ENCODE measurements at regions of chr14 and their contacts with region 1.

Region 1: GRCh38 chr14:80996049-80996901 is 40.9 kb downstream of the TSHR start:
- DNase-seq: peak; percentile 86
- H3K4me3 Mint-ChIP-seq: no peak overlapping the region
- H3K27ac Mint-ChIP-seq: no peak overlapping the region
- H3K4me1 Mint-ChIP-seq: no peaks in the 10 kb centered on the region
- H3K27me3 Mint-ChIP-seq: peaks cover 65% of the 10 kb centered on the region
- CTCF ChIP-seq: peak; percentile 63

Region 2: GRCh38 chr14:80636071-80636470 is 360.2 kb before region 1 on chr14:
- CTCF ChIA-PET with region 1: no interaction called
- POLR2A ChIA-PET with region 1: no interaction called
- intact Hi-C with region 1: no loop called
- DNase-seq: peak; percentile 38
- H3K4me3 Mint-ChIP-seq: no peak overlapping the region
- H3K27ac Mint-ChIP-seq: no peak overlapping the region
- H3K4me1 Mint-ChIP-seq: peaks cover 35% of the 10 kb centered on the region
- H3K27me3 Mint-ChIP-seq: no peaks in the 10 kb centered on the region
- CTCF ChIP-seq: peak; percentile 21

Region 3: GRCh38 chr14:80954687-80955299 is 41.5 kb before region 1 on chr14:
- CTCF ChIA-PET with region 1: interaction called, 140 read pairs
- POLR2A ChIA-PET with region 1: interaction called, 3 read pairs
- intact Hi-C with region 1: no loop called
- DNase-seq: peak; percentile 75
- H3K4me3 Mint-ChIP-seq: peak overlapping the region; percentile 70
- H3K27ac Mint-ChIP-seq: no peak overlapping the region
- H3K4me1 Mint-ChIP-seq: no peaks in the 10 kb centered on the region
- H3K27me3 Mint-ChIP-seq: peaks cover 76% of the 10 kb centered on the region
- CTCF ChIP-seq: peak; percentile 76

Region 4: DNA sequence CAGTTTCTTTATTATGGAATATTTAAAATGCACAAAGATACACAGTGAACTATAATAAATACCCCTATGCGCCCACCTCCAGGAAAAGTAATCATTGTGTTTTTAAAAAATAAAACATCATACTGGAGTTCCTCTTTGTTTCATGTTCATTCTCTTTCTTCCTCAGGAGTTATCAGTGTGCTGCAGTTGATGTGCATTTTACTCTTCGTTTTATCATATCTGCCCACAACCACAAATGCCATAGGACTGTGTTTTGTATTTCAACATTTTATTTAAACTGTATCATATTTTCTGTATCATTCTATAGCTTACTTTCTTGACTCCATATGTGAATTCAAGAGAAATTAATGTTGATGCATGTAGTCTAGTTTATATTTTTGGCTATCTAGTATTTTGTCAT is 13.1 kb after region 1 on chr14:
- CTCF ChIA-PET with region 1: interaction called, 13 read pairs
- POLR2A ChIA-PET with region 1: no interaction called
- intact Hi-C with region 1: no loop called
- DNase-seq: no peak
- H3K4me3 Mint-ChIP-seq: no peak overlapping the region
- H3K27ac Mint-ChIP-seq: no peak overlapping the region
- H3K4me1 Mint-ChIP-seq: no peaks in the 10 kb centered on the region
- H3K27me3 Mint-ChIP-seq: no peaks in the 10 kb centered on the region
- CTCF ChIP-seq: no peak

Region 5: DNA sequence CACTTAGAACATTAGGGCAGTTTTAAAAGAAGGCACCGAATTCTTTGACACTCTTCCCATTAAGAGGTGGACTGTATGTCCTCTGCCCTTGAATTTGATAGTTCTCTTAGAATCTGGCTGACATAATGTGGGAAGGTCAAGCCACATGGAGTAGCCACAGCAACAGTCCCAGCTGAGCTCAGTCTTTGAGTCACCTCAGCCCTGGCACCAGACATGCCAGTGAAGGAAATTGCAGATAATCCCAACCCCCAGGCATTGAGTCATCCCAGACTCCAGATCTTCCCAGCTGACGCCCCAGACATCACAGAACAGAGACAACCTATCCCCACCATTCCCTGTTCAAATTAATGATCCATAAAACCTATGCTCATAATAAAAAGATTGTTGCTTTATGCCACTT is 141.0 kb after region 1 on chr14:
- CTCF ChIA-PET with region 1: interaction called, 10 read pairs
- POLR2A ChIA-PET with region 1: no interaction called
- intact Hi-C with region 1: no loop called
- DNase-seq: peak; percentile 81
- H3K4me3 Mint-ChIP-seq: no peak overlapping the region
- H3K27ac Mint-ChIP-seq: no peak overlapping the region
- H3K4me1 Mint-ChIP-seq: peaks cover 11% of the 10 kb centered on the region
- H3K27me3 Mint-ChIP-seq: no peaks in the 10 kb centered on the region
- CTCF ChIP-seq: no peak

Region 6: DNA sequence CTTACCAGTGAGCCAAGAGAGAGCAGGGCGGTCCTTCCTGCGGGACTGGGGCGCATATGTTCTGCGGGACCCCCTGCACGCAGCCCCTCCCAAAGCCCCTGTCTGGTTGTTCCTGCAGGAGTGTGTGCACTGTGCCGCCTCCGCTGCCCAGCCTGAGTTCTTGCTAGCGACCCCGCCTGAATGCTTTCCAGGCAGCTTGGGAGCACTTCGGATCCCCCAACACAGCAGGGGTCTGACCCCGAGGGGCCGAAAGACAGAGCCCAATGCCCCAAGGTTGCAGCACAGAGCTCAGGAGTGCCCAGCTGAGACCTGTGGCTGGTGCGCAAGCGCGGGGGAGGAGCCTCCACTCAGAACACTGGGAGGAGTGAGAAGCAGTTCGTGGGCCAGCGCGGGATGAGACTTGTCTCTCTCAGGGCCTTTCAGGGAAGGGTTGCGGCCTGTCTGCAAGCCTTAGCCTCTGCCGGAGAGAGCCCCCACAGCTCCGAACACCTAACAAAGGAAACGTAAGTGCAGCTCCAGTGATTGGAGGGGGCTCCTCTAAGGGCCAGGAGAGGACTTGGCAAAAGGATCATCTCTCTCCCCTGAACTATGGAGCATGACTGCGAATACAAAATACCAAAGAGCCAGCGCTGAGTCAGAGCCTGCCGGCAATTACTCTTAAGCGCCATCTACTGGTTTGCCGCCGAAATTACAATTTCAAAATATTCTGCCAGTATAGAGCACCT is 174.0 kb after region 1 on chr14:
- CTCF ChIA-PET with region 1: interaction called, 76 read pairs
- POLR2A ChIA-PET with region 1: interaction called, 17 read pairs
- intact Hi-C with region 1: loop called (anchors 1 kb)
- DNase-seq: peak; percentile 89
- H3K4me3 Mint-ChIP-seq: peak overlapping the region; percentile 80
- H3K27ac Mint-ChIP-seq: peak overlapping the region; percentile 78
- H3K4me1 Mint-ChIP-seq: peaks cover 15% of the 10 kb centered on the region
- H3K27me3 Mint-ChIP-seq: no peaks in the 10 kb centered on the region
- CTCF ChIP-seq: peak; percentile 66

Region 7: GRCh38 chr14:81211844-81212243 is 215.6 kb after region 1 on chr14:
- CTCF ChIA-PET with region 1: interaction called, 3 read pairs
- POLR2A ChIA-PET with region 1: no interaction called
- intact Hi-C with region 1: loop called (anchors 2 kb)
- DNase-seq: peak; percentile 23
- H3K4me3 Mint-ChIP-seq: no peak overlapping the region
- H3K27ac Mint-ChIP-seq: no peak overlapping the region
- H3K4me1 Mint-ChIP-seq: no peaks in the 10 kb centered on the region
- H3K27me3 Mint-ChIP-seq: no peaks in the 10 kb centered on the region
- CTCF ChIP-seq: no peak